Sciatic nerve (tissue), 2 donors: ENCODE measurements at regions of chr5 and their contacts with region 1.

Region 1: DNA sequence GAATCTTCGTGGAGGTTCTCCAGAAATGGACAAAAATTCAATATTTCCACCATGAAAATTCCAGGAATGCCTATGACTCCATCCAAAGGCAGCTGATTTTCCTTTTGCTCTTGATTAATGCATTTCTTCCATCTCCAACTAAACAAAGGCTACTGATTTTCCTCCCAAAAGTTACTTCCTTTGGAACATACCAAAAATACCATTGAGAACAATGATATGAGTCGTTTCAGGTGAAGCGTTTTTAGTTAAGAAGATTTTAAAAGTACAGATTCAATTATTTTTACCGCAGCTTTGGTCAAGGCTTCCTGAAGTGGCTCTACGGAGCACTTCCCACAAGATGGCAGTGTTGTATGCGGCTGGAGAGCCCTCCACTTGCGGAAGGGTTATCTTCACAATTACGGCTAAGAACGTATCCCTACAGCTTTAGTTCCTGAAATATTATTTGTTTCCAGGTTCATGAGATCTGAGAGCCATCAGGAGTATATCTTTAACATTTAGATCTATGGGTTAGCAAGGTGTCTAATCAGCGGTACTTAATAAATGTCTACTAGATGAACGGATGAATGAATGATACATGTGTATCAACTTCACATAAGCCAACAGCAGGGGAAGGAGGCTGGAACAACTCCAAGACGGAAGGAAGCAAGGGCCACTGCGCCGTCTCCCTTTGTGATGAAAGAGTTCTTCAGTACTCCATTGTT is 35.9 kb upstream of the ARSB start:
- DNase-seq: peak; percentile 77
- ATAC-seq: peak; percentile 86

Region 2: DNA sequence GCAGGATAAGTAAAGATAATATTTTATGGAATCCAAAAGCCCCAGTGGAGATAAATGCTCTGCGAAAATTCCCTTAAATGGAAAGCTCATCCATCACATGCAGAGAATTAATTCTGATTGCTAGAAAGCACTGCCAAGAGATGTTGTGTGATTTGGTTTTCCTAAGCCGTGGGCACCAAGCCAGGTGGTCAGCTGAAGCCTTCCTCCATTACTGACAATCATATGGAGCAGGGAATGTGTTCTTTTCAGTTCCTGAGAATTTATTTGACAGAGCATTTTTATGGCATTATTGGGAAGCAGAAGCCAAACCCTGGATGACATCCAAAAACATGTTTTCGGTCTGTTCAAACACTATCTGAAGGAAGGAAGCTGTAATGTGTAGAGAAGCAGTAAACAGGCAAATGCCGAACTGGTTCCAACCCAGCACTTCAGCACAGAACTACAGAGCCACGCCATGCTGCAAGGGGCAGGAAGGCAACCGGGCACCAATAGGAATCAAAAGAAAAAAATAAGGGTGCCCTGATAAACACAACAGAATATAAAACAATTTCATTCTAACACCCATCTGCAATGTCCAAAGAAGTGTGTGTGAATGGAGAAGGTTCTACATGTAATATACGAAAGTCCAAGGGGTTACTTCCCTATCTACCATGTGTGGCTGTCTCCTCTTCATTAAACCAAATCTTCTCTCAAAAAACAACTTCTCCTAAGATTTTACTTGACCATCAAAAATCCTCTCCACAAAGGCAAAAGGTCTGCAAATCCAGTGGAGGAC is 48.2 kb before region 1 on chr5:
- intact Hi-C with region 1: loop called (anchors 1 kb)
- DNase-seq: no peak
- ATAC-seq: peak; percentile 77

Region 3: GRCh38 chr5:79050498-79050897 is 29.5 kb after region 1 on chr5:
- intact Hi-C with region 1: no loop called
- DNase-seq: no peak
- ATAC-seq: peak; percentile 93

Region 4: DNA sequence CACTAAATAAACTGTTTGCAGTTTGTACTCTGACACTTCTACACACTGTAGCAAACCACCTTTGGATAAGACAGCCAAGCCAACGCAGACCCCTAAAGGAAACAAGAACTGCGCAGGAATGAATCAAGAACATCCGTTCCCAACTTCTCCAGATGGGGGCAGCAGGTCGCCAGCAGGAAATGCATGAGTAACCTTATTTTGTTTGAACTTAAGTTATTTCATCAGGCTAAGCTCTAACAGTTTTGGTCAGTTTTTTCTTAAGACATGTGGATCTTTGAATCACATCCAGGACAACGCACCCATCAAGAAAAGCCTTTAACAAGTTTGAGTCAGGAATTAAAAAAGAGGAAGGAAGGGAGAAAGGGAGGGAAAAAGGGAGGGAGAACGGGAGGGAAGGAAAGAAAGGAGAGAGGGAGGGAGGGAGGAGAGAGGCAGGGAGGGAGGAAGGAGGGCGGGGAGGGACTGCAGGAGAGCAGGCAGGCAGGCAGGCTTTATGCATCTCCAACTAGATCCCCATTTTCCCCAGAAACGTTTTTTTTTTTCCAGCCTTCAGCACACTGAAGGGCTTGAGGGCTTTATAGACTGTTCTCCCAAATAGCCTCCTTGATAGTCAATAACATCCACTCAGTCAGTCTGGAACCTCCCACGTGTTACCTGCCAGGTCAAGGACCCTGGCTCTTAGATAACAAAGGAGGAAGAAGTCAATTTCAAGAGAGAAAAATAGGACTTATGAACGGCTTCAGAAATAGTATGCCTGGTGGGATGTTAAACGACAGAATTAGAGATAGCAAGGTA is 112.8 kb after region 1 on chr5:
- intact Hi-C with region 1: loop called (anchors 10 kb)
- DNase-seq: peak; percentile 82
- ATAC-seq: peak; percentile 89

Region 5: GRCh38 chr5:79284846-79285245 is 263.8 kb after region 1 on chr5:
- intact Hi-C with region 1: no loop called
- DNase-seq: no peak
- ATAC-seq: no peak